ENCODE measurements at regions of chr1 and their contacts with region 1.

Region 1: GRCh38 chr1:9867408-9868243 is 42.4 kb downstream of the CTNNBIP1 start:
- DNase-seq: peak; percentile 95
- H3K4me3 Mint-ChIP-seq: no peak overlapping the region
- H3K27ac Mint-ChIP-seq: no peak overlapping the region
- H3K4me1 Mint-ChIP-seq: no peaks in the 10 kb centered on the region
- H3K27me3 Mint-ChIP-seq: no peaks in the 10 kb centered on the region

Region 2: DNA sequence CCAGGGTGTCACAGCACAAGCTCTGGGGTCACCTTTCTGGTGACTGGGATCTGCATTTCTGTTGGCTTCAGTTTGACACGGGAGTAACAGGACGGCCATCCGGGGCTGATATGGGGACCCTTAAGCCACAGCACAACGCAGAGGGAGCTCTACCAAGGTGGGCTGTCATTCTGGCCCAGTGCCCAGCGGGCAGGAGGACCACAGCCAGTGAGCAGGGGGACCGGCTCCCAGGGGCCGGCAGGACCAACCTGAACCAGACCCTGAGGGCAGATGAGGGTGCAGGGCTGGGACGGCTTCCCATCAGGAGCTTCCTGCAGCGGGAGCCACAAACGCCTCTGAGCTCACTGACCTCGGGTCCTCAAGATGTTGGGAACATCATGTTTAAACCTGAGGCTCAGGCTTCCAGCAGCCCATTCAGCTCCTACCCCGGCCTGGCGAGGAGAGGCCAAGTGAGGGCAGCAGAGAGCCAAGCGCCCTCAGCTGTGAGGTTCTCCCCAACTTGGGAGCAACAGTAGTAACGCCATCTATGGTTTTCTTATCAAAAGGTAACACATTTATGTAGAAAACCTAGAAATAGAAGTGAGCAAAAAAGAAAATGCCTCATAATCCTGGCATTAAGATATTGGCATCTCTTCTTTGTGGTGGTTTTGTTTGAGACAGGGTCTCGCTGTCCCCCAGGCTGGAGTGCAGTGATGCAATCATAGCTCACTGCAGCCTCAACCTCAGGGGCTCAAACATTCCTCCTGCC is 252.1 kb before region 1 on chr1:
- CTCF ChIA-PET with region 1: interaction called, 18 read pairs
- intact Hi-C with region 1: no loop called
- DNase-seq: peak; percentile 70
- H3K4me3 Mint-ChIP-seq: no peak overlapping the region
- H3K27ac Mint-ChIP-seq: no peak overlapping the region
- H3K4me1 Mint-ChIP-seq: no peaks in the 10 kb centered on the region
- H3K27me3 Mint-ChIP-seq: peaks cover 2% of the 10 kb centered on the region